Lower leg skin (tissue), 4 donors: ENCODE measurements at regions of chr18 and their contacts with region 1.

Region 1: DNA sequence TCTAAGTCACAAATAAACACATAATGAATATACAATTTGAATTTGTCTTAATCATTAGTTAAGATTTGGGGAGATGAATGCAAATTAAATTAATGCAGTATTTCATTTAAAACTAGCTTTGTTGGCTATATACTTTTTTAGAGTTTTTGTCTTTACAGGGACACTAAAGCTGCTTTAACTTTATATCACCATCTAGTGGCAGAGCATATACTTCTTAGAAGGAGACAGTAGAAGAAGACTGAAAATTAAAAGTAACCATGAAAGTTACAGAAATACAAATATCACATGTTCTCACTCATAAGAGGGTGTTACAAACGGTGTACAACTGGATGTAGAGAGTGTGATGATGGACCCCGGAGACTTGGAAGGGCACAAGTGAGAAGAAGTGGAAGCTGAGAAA is 268.3 kb upstream of the NETO1 start:
- DNase-seq: no peak
- H3K4me3 ChIP-seq: no peak overlapping the region
- CTCF ChIP-seq: no peak
- POLR2A ChIP-seq: no peak

Region 2: DNA sequence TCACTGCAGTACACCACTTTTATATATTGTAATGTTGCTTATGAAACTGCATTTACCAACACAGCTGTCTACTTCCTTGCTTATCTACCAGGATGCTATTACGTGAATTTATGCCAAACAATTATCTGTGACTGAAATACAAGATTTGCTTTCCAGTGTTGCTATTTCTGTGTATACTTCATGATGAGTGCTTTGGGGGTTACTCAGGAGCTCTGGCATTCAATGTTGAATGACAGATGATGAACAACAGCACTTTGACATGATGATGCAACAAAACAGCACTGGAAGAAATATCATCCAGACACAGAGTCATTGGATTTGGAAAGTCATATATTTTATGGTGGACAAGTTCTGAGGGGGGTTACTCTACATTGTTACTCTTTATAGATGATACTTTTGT is 394.1 kb before region 1 on chr18:
- intact Hi-C with region 1: no loop called
- DNase-seq: no peak
- H3K4me3 ChIP-seq: no peak overlapping the region
- CTCF ChIP-seq: no peak
- POLR2A ChIP-seq: no peak

Region 3: GRCh38 chr18:73199151-73199550 is 63.0 kb after region 1 on chr18:
- intact Hi-C with region 1: loop called (anchors 10 kb)
- DNase-seq: no peak
- H3K4me3 ChIP-seq: no peak overlapping the region
- CTCF ChIP-seq: no peak
- POLR2A ChIP-seq: no peak